ENCODE measurements at regions of chr6 and their contacts with region 1.

Region 1: DNA sequence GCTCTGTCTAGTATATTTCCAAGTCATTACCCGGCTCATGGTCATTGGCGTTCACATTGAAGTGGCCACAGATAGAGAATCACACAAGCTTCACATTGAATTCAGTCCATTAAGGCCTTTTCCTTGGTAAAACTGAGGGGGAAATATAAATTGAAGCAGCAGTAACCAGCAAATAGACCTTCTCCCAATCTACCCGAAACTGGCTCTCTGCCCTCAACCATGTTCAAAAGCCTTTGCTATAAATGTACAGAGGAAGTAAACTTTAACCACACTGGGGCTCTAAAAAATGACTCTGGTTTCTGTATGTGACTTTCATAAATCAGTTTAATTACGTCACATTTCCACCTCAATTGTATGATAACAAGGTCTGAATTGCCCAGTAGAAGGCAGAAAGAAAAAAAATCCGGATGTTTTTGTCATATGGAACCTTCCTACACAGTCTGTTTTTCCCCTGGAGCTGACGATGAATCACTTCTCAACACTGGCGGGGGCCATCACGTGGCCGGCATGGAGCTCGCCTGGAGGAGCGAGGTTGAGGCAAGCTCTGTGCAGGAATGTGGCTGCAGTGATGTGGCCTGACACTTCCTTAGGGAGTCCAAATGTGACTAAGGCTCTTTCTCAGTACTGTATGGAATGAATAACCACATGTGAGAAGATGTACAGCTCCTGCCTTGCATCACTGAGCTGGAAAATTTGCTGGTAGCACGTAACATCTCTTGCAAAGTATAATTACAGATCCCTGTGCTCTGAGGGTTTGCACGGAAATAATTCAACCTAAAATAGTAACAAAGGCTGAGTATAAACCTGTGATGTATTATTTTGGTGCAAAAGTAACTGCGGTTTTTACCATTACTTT is 58.6 kb upstream of the SNX9 start:
- DNase-seq: peak; percentile 58 to 96 (median 93)
- ATAC-seq: peak; percentile 87
- H3K4me3 ChIP-seq: peak overlapping the region; percentile 49
- H3K4me3 Mint-ChIP-seq: peak overlapping the region; percentile 71 to 84 (median 78)
- H3K27ac ChIP-seq: peak overlapping the region; percentile 56
- H3K27ac Mint-ChIP-seq: peak overlapping the region; percentile 90 to 99 (median 96)
- H3K4me1 ChIP-seq: peaks cover 27 to 65% of the 10 kb centered on the region in 2 donors
- H3K4me1 Mint-ChIP-seq: peaks cover 43 to 91% (median 75%) of the 10 kb centered on the region in 7 donors
- H3K27me3 ChIP-seq: no peaks in the 10 kb centered on the region
- H3K27me3 Mint-ChIP-seq: peaks cover 0 to 31% (median 0%) of the 10 kb centered on the region in 5 donors

Region 2: GRCh38 chr6:157054531-157054979 is 709.9 kb before region 1 on chr6:
- CTCF ChIA-PET with region 1: no interaction called
- POLR2A ChIA-PET with region 1: no interaction called
- intact Hi-C with region 1: loop called in 1 of 2 experiments (anchors 10 kb)
- DNase-seq: peak in 7 of 9 donors; percentile 60 to 83 (median 78)
- ATAC-seq: peak; percentile 97
- H3K4me3 ChIP-seq: peak overlapping the region; percentile 19
- H3K4me3 Mint-ChIP-seq: peak overlapping the region; percentile 37 to 73 (median 58)
- H3K27ac ChIP-seq: peak overlapping the region; percentile 60
- H3K27ac Mint-ChIP-seq: peak overlapping the region; percentile 81 to 94 (median 88)
- H3K4me1 ChIP-seq: peaks cover 27 to 31% of the 10 kb centered on the region in 2 donors
- H3K4me1 Mint-ChIP-seq: peaks cover 34 to 73% (median 57%) of the 10 kb centered on the region in 7 donors
- H3K27me3 ChIP-seq: no peaks in the 10 kb centered on the region
- H3K27me3 Mint-ChIP-seq: no peaks in the 10 kb centered on the region

Region 3: DNA sequence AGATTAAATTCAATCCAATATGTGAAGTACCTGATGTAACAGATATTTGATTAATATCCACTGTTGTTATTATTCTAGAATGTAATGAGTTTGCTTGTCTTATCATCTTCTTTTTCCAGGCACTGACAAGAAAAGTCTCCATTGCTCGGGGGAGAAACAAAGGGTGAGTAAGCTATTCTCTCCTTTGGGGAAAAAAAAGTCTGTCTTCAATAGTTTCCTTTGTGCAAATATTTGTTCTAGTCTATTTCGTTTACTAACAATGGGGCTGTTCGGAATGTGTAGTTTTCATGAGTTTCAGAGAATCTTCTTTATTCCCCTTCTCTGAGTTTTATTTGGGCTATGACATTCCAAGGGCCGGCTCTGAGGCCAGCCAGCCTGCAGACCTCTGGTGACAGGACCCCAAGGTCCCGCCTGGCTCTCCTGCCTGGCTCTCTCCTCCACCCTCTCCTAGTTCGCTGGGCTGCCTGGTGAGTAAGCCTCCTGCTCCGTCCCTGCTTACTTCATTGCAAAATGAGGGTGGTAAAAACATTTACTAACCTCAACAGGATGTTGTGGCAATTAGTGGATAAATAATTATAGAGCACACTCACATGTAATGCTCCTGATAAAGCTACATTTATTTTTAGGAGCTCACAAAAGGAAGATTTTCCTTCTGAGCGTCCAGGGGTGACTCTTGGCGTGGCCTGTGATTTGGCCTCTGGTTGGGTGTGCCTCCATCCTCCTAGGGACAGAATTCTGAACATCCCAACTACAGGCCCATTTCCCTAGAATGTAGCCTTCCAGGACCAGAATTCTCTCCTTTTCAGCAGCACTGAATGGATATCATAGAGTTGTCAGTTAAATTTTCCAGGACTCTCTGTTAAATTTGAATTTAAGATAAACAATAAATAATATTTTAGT is 15.5 kb after region 1 on chr6:
- CTCF ChIA-PET with region 1: interaction called, 5 read pairs
- POLR2A ChIA-PET with region 1: interaction called, 3 read pairs
- intact Hi-C with region 1: loop called in 1 of 2 experiments (anchors 2 kb)
- DNase-seq: no peak
- ATAC-seq: no peak
- H3K4me3 ChIP-seq: no peak overlapping the region
- H3K4me3 Mint-ChIP-seq: no peak overlapping the region
- H3K27ac ChIP-seq: no peak overlapping the region
- H3K27ac Mint-ChIP-seq: peak overlapping the region in 2 of 9 donors; percentile 1 to 60
- H3K4me1 ChIP-seq: no peaks in the 10 kb centered on the region
- H3K4me1 Mint-ChIP-seq: peaks cover 0 to 9% (median 0%) of the 10 kb centered on the region in 7 donors
- H3K27me3 ChIP-seq: no peaks in the 10 kb centered on the region
- H3K27me3 Mint-ChIP-seq: peaks cover 0 to 56% (median 0%) of the 10 kb centered on the region in 5 donors

Region 4: DNA sequence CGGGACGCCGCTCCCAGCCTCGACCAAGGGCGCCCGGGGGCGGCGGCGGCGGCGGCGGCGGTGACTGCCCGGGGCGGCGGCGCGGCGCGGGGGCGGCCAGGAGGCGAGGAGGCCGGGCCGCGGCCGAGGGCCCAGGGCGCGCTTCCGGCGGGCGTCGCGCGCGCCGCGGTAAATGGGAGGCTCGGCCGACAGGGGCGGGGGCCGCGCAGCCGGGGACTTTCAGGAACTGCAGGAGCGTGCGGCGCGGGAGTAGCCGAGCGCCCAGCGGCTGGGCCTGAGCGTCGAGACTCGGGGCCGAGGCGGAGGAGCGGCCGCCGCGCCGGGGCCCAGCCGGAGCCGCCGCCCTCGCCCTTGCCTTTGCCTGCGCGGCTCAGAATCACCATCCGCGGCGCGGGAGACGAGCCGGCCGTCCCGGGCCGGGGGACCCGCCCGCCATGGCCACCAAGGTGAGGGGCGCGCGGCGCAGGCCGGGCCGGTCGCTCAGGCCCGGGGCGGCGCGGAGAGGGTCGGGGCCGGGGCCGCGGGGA is 58.7 kb after region 1 on chr6 and contains the start of gene SNX9:
- CTCF ChIA-PET with region 1: no interaction called
- POLR2A ChIA-PET with region 1: interaction called, 3 read pairs
- intact Hi-C with region 1: loop called (anchors 1 kb)
- DNase-seq: peak in 8 of 9 donors; percentile 27 to 74 (median 56)
- ATAC-seq: peak; percentile 77
- H3K4me3 ChIP-seq: peak within 1 kb of the TSS; percentile 60
- H3K4me3 Mint-ChIP-seq: peak within 1 kb of the TSS; percentile 88 to 100 (median 96)
- H3K27ac ChIP-seq: peak within 1 kb of the TSS; percentile 96
- H3K27ac Mint-ChIP-seq: peak within 1 kb of the TSS; percentile 95 to 100 (median 99)
- H3K4me1 ChIP-seq: peaks cover 9 to 16% of the 10 kb centered on the region in 2 donors
- H3K4me1 Mint-ChIP-seq: peaks cover 15 to 70% (median 57%) of the 10 kb centered on the region in 7 donors
- H3K27me3 ChIP-seq: no peaks in the 10 kb centered on the region
- H3K27me3 Mint-ChIP-seq: peaks cover 0 to 42% (median 0%) of the 10 kb centered on the region in 5 donors
- total RNA-seq, gene SNX9: 13.4 to 39.2 (median 36.4) TPM

Region 5: GRCh38 chr6:157885211-157885788 is 120.9 kb after region 1 on chr6:
- CTCF ChIA-PET with region 1: interaction called, 5 read pairs
- POLR2A ChIA-PET with region 1: interaction called, 18 read pairs
- intact Hi-C with region 1: loop called (anchors 1 kb)
- DNase-seq: peak in 7 of 9 donors; percentile 74 to 90 (median 86)
- ATAC-seq: peak; percentile 89
- H3K4me3 ChIP-seq: no peak overlapping the region
- H3K4me3 Mint-ChIP-seq: peak overlapping the region; percentile 30 to 78 (median 54)
- H3K27ac ChIP-seq: peak overlapping the region; percentile 93
- H3K27ac Mint-ChIP-seq: peak overlapping the region; percentile 86 to 99 (median 96)
- H3K4me1 ChIP-seq: peaks cover 0 to 33% of the 10 kb centered on the region in 2 donors
- H3K4me1 Mint-ChIP-seq: peaks cover 31 to 92% (median 85%) of the 10 kb centered on the region in 7 donors
- H3K27me3 ChIP-seq: no peaks in the 10 kb centered on the region
- H3K27me3 Mint-ChIP-seq: peaks cover 0 to 3% (median 0%) of the 10 kb centered on the region in 5 donors

Region 6: DNA sequence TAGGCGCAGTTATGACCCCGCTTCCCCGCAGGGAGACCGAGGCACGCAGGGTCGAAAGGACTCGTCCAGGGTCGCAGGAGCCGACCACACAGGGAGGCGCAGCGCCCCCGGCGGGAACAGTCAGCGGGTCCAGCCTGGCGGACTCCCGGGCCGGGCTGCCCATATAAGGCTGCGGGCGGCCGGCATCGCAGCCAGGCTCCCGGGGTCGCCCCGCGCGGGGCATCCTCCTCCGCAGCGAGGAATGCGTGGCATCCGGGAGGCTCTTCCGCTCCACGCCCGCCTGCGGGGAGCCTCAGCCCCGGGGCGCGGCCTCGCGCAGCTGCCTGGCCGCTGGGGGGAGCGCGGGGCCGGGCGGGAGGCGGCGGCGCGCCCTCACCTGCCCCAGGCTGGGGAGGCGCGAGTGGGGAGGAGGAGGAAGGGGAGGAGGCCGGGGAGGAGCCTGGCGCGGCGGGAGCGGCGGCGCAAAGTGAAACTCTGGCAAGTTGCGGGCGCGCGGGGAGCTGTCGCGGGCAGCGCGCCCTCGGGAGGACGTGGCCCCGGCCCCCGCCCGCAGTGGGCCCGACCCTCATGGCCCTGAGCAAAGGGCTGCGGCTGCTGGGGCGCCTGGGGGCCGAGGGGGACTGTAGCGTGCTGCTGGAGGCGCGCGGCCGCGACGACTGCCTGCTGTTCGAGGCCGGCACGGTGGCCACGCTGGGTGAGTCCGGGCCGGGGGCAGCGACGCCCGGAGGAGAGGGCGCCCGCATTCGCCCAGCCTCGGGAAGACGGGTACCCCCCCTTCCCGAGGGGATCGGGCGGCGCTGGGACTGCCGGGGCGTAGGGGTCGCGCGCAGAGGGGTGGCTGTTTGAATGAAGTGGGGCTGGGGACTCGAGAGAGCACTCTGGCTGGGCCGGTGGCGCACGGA is 217.2 kb after region 1 on chr6 and contains the start of gene SYNJ2:
- CTCF ChIA-PET with region 1: no interaction called
- POLR2A ChIA-PET with region 1: no interaction called
- intact Hi-C with region 1: loop called (anchors 1 to 2 kb)
- DNase-seq: peak; percentile 73 to 89 (median 87)
- ATAC-seq: peak; percentile 96
- H3K4me3 ChIP-seq: peak within 1 kb of the TSS; percentile 81
- H3K4me3 Mint-ChIP-seq: peak within 1 kb of the TSS; percentile 75 to 94 (median 84)
- H3K27ac ChIP-seq: peak within 1 kb of the TSS; percentile 83
- H3K27ac Mint-ChIP-seq: peak within 1 kb of the TSS; percentile 78 to 95 (median 88)
- H3K4me1 ChIP-seq: peaks cover 27 to 38% of the 10 kb centered on the region in 2 donors
- H3K4me1 Mint-ChIP-seq: peaks cover 26 to 65% (median 55%) of the 10 kb centered on the region in 7 donors
- H3K27me3 ChIP-seq: no peaks in the 10 kb centered on the region
- H3K27me3 Mint-ChIP-seq: no peaks in the 10 kb centered on the region
- total RNA-seq, gene SYNJ2: 22.4 to 36.6 (median 22.5) TPM

Region 7: DNA sequence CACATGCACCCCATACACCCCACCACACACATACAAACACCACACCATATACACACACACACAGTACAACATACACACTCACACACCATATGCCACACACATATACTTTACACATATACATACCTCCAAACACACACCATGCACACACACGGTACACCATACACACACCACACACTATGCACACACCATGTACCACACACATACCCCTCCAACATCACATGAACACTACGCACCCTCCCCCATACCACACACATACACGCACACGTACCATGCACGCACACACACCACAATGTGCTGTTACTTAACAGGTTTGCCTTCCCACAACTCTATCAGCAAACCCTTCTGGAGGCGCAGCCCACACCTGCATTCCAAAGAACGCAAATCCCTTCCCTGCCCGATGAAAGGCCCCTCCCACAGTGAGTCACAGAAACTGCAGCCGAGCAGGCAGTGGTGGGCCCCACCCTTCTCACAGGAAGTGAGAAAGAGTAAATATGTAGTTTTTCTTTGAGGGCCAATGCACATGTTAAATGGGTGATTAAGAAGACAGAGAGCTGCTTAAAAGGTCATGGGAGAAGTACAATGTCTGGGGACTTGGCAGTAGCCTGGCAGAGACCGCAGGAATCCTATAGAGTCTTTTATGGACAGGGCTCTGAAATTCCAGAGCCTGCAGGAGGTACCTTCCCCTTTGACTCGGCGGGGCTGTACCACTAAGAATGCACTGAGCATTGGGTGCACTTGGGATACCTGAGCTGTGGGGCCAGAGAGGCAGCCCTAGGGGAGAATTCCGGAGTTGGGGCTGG is 1088.9 kb after region 1 on chr6:
- CTCF ChIA-PET with region 1: no interaction called
- POLR2A ChIA-PET with region 1: no interaction called
- intact Hi-C with region 1: loop called (anchors 10 kb)
- DNase-seq: peak; percentile 54 to 93 (median 86)
- ATAC-seq: peak; percentile 79
- H3K4me3 ChIP-seq: peak overlapping the region; percentile 55
- H3K4me3 Mint-ChIP-seq: no peak overlapping the region
- H3K27ac ChIP-seq: peak overlapping the region; percentile 83
- H3K27ac Mint-ChIP-seq: no peak overlapping the region
- H3K4me1 ChIP-seq: peaks cover 47 to 55% of the 10 kb centered on the region in 2 donors
- H3K4me1 Mint-ChIP-seq: peaks cover 16 to 42% (median 33%) of the 10 kb centered on the region in 7 donors
- H3K27me3 ChIP-seq: no peaks in the 10 kb centered on the region
- H3K27me3 Mint-ChIP-seq: no peaks in the 10 kb centered on the region

Measured in naive thymus-derived CD4-positive, alpha-beta T cell (primary cell).